Prostate gland (tissue), 2 donors: ENCODE measurements at regions of chr5 and their contacts with region 1.

Region 1: DNA sequence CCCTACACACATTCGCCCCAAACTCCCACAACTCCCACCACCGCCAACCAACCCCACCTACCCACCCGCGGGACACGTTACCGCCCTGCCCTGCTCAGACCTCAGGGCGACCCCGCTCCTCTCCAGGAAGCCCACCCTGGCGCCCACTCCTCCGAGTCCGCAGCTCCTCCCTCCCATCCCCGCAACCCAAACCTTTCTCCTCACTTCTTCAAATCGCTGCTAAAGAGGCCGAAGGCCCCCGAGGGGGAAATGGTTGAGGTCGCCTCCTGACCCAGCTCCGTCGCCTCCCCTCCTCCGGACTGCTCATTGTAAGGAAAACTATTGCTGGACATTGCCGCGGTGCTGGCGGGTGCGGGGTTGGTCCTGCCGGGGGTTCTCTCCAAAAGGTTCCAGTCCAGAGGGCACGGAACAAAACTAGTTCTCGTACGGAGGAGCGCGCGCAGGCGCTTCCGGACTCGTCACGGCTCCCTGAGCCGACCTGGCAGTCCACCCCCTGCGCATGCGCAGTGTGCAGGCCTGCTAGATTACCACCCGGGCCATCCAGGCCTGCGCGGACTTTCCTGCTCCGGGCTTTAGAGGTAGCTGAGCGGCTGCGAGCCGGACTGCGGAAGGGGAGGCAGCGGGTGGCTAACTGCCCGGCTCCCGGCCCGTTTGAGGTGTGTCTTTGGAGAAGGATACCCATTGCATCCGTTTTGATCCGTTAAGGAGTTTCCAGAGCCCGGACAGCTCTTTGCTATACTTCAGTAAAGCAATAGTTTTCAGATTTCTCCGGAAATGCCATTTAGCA is at the start of gene AP3B1:
- DNase-seq: peak; percentile 99
- H3K4me3 ChIP-seq: peak within 1 kb of the TSS; percentile 64 to 98
- H3K27ac ChIP-seq: peak within 1 kb of the TSS; percentile 73 to 87
- H3K4me1 ChIP-seq: no peaks in the 10 kb centered on the region
- H3K27me3 ChIP-seq: no peaks in the 10 kb centered on the region
- CTCF ChIP-seq: peak in 2 of 4 experiments; percentile 23 to 36
- POLR2A ChIP-seq: peak; percentile 89
- total RNA-seq, gene AP3B1: 33.1 to 60.5 TPM

Region 2: DNA sequence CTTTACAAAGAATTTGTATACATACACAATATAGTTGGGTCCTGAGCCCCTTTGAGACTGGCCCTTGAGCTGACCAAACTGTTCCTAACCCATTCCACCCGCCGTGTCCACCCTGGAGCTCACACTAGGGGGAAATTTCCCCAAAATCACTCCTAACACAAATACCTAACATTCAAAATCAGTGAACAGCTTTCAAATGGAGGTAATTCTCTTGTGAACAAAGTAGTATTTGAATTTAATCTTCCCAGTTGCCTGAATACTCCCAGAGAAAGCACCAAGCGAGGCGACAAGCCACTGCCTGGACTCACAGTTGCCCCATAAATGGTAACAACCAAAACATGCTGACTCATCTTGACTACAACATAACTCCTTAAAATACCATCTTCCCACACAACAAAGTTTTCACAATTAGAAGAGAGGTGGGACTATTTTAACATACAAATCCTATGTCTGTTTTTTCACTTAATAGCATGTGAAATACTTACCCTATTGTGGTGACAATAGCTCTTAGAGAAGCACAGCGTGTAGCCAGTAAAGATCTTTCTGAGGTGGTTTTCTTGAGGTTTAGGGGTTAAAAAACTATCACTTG is 34.2 kb after region 1 on chr5:
- intact Hi-C with region 1: no loop called
- DNase-seq: no peak
- H3K4me3 ChIP-seq: no peak overlapping the region
- H3K27ac ChIP-seq: no peak overlapping the region
- H3K4me1 ChIP-seq: no peaks in the 10 kb centered on the region
- H3K27me3 ChIP-seq: no peaks in the 10 kb centered on the region
- CTCF ChIP-seq: no peak
- POLR2A ChIP-seq: no peak

Region 3: DNA sequence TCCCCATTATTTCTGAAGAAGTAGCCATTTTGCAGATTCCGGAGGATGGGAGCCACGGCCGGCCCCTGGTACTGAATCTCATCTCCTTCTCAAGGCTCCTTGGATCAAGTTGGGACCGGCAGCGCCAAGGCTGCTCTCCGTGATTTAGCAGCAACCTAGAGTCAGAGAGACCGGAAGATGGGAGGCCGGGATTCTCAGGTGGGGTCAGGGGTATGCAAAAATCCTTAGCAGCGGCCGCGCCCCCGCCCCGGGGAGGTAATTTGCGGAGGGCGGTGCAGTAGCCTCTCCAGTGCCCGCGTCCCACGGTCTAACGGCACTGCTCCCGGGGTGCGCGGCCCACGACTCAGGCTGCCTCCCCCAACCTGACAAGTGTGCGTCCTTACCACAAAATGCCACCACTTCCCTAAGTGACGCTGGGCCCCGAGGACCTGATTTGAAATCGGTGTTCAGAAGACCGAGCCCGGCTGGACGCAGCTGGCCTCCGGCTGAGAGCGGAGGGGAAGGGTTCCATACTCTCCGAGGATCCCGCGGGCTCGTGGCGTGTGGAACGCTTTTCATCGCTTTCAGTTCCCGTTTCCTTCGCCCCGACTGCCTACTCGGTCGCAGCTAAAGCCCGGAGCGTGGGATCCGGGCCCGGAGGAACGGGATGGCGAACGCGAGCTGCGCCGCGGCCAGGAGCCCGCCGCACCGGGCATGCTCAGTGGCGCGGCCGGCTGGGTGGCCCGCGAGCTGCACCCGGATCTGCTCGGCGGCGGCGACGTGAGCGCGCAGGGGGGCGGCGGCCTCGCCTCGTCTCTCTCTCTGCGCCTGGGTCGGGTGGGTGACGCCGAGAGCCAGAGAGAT is 65.6 kb after region 1 on chr5 and contains the start of gene SCAMP1:
- intact Hi-C with region 1: loop called (anchors 1 kb)
- DNase-seq: peak; percentile 88
- H3K4me3 ChIP-seq: peak within 1 kb of the TSS; percentile 93 to 96
- H3K27ac ChIP-seq: peak within 1 kb of the TSS; percentile 90 to 92
- H3K4me1 ChIP-seq: peaks cover 5% of the 10 kb centered on the region
- H3K27me3 ChIP-seq: no peaks in the 10 kb centered on the region
- CTCF ChIP-seq: peak in 2 of 4 experiments; percentile 65 to 66
- POLR2A ChIP-seq: peak; percentile 78
- total RNA-seq, gene SCAMP1: 39.0 to 41.0 TPM